Esophagus squamous epithelium (tissue), 5 donors: ENCODE measurements at regions of chr14 and their contacts with region 1.

Region 1: GRCh38 chr14:39266871-39267591 is 33.3 kb downstream of the MIA2 start:
- DNase-seq: peak; percentile 37
- H3K4me3 ChIP-seq: peak overlapping the region; percentile 66 to 95 (median 82)
- H3K27ac ChIP-seq: peak overlapping the region; percentile 93 to 99 (median 98)
- H3K4me1 ChIP-seq: peaks cover 4 to 50% (median 20%) of the 10 kb centered on the region in 3 donors
- H3K27me3 ChIP-seq: no peaks in the 10 kb centered on the region
- CTCF ChIP-seq: no peak
- POLR2A ChIP-seq: peak in 2 of 4 donors; percentile 76 to 86

Region 2: DNA sequence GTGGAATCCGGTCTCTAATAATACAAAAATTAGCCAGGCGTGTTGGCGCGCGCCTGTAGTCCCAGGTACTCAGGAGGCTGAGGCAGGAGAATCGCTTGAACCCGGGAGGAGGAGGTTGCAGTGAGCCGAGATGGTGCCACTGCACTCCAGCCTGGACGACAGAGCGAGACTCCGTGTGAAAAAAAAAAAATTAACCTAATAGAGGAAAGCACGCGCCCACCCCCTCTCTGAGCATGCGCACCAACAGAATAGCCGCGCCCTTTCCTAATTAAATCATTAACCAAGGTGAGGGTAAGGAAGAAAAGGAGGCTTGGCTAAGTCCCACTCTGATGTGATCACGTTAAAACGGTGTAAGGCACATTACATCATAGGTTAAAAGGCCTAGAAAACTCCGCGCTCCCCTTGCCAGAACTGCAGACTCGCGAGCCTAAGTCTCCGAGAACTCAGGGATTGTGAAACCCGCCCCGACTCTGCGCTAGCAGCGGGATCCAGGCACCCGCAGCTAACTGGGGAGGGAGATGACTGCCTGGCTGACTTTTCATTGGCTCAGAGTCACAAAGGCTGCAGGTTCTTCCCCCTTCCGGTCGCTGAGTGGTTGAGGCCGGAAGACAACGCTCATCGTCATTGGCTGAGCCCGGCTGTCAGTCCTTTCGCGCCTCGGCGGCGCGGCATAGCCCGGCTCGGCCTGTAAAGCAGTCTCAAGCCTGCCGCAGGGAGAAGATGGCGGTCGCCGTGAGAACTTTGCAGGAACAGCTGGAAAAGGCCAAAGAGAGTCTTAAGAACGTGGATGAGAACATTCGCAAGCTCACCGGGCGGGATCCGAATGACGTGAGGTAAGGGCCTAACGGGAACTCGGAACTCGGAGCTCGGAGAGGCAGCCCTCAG is 92.2 kb before region 1 on chr14 and contains the start of gene PNN:
- intact Hi-C with region 1: loop called (anchors 5 kb)
- DNase-seq: peak; percentile 89
- H3K4me3 ChIP-seq: peak within 1 kb of the TSS; percentile 76 to 99 (median 84)
- H3K27ac ChIP-seq: peak within 1 kb of the TSS; percentile 94 to 98 (median 96)
- H3K4me1 ChIP-seq: peaks cover 6 to 42% (median 23%) of the 10 kb centered on the region in 3 donors
- H3K27me3 ChIP-seq: no peaks in the 10 kb centered on the region
- CTCF ChIP-seq: peak in 2 of 6 experiments; percentile 0 to 10
- POLR2A ChIP-seq: peak in 3 of 4 donors; percentile 89 to 96 (median 94)
- total RNA-seq, gene PNN: 16.7 to 43.9 (median 24.8) TPM